A549 (cell line): ENCODE measurements at regions of chr15 and their contacts with region 1.

Region 1: DNA sequence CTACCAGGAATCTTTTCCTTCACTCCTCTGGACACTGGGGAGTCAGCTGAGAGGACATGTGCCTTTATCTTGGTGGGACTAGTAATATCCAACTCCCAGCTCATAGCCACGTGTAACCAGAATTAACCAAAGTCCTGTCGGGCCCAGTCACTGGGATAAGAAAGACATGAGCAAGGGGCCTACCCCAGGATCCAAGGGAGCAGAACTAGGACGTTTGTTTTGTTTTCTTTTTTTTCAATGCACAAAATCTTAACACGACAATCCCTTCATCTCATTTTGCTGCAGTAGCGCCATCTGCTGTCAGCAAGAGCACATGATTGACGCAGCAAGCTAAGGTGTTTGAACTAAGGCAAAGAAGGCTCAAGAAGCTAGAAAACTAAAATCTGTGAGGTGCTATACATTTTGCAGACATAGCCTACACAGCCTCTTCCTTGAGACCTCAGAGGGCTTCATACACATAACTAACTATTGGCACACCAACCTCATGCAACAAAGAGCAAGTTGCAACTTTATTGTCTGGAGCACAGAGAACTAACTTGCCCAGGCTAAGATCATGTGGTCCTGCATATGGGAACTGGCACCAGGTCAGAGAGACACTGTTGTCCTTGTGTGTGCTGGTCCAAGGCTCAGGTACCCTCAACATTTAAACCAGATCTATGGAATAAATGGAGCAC is 43.6 kb downstream of the RLBP1 start:
- DNase-seq: peak; percentile 70 to 82
- ATAC-seq: peak; percentile 83 to 89
- H3K4me3 ChIP-seq: no peak overlapping the region
- H3K27ac ChIP-seq: peak overlapping the region; percentile 10 to 14; a peak in 1 of 6 replicates
- H3K4me1 ChIP-seq: no peaks in the 10 kb centered on the region
- CTCF ChIP-seq: peak; percentile 98
- EP300 ChIP-seq: no peak
- POLR2A ChIP-seq: no peak
- RAD21 ChIP-seq: peak; percentile 94 to 96

Region 2: DNA sequence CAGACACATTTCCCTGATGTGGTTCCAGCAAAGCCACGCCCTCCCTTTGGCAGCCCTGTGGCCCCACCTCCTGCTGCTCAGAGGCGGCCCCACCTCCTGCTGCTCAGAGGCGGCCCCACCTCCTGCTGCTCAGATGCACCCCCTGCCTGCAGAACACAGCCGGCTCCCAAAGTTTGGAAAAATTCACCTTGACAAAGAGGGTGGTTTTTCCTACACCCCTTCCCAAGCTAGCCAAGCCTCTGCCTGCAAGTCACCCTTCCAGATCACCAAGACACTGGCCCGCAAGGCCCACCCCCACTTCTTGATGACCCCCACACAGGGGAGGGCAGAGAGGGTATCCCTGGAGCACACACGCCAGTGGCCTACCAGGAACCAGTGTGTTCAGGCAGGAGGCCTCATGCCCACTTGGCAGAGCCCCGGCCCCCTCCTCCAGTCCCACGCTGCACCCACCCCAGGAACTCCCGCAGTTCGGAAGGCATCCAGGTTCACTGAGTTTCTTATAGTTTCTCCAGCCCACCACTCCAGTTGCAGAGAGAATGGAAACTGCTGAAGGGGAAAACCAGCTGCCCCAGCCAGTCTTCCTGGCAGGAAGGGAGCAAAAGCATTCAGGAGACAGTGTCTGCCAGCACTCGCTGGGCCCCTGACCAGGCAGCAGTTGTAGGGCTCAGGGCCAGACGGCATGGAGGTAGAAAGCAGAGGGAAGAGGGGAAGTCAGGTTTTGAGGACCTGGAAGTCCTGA is 280.1 kb before region 1 on chr15:
- CTCF ChIA-PET with region 1: interaction called, 132 read pairs
- POLR2A ChIA-PET with region 1: no interaction called
- DNase-seq: peak; percentile 80 to 88
- ATAC-seq: peak; percentile 66 to 81
- H3K4me3 ChIP-seq: no peak overlapping the region
- H3K27ac ChIP-seq: peak overlapping the region; percentile 35 to 62; a peak in 5 of 6 replicates
- H3K4me1 ChIP-seq: peaks cover 32% of the 10 kb centered on the region
- CTCF ChIP-seq: peak; percentile 47
- EP300 ChIP-seq: no peak
- POLR2A ChIP-seq: no peak
- RAD21 ChIP-seq: peak; percentile 37; a peak in 3 of 5 replicates

Region 3: DNA sequence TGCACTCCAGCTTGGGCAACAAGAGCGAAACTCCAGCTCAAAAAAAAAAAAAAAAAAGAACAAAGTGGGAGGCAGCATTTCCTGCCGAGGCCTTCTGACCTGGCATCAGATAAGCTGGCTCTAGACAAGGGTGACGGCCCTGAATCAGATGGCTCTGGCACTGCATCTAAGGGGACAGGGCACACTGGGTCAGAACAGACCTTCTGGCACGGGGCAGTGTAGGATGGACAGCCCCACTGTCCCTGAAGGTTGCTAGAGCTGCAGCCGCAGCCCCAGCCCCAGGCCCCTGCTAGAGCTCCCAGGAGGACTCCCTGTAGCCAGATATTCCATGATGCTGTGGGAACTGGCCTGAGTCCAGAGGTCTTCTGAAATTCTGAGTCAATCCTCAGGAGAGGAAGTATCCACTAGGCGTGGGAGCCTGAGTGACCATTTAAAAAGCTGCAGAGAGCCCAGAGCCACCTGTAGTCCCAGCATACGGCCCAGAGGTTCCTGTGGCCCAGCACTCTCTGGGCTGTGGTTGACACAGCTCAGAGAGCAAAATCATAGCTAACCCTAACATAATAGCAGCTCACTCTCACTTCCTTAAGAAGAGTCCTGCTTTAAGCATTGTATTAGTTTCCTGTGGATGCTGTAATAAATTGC is 195.3 kb before region 1 on chr15:
- CTCF ChIA-PET with region 1: no interaction called
- POLR2A ChIA-PET with region 1: no interaction called
- DNase-seq: peak; percentile 72 to 86
- ATAC-seq: peak; percentile 78 to 89
- H3K4me3 ChIP-seq: no peak overlapping the region
- H3K27ac ChIP-seq: peak overlapping the region; percentile 87 to 89
- H3K4me1 ChIP-seq: peaks cover 57% of the 10 kb centered on the region
- CTCF ChIP-seq: no peak
- EP300 ChIP-seq: peak in 1 of 2 experiments; percentile 28; a peak in 2 of 5 replicates
- POLR2A ChIP-seq: no peak; the same call in none of the 2 replicates
- RAD21 ChIP-seq: no peak; a peak in 2 of 5 replicates

Region 4: DNA sequence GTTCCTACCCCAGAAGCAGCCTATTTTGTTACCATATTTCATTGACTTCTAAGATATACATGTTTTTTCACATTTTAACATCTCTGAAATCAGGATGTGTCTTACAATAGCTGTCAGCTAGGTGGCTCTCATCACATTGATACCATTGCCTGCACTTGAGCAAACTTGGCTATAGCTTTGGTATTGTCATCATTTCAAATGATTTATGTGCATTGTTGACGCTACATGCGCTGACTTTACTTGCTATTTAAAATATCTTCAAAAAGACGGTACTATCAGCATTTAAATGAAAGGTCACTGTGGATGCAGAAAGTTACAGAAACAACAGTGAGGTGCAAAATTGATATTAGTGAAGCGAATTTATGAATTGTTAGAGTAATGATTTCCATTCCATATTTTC is 143.5 kb before region 1 on chr15:
- CTCF ChIA-PET with region 1: interaction called, 224 read pairs
- POLR2A ChIA-PET with region 1: no interaction called
- DNase-seq: peak; percentile 54 to 62
- ATAC-seq: peak; percentile 56 to 76; a peak in 5 of 6 replicates
- H3K4me3 ChIP-seq: no peak overlapping the region
- H3K27ac ChIP-seq: no peak overlapping the region
- H3K4me1 ChIP-seq: no peaks in the 10 kb centered on the region
- CTCF ChIP-seq: peak; percentile 62
- EP300 ChIP-seq: no peak
- POLR2A ChIP-seq: no peak
- RAD21 ChIP-seq: peak; percentile 63 to 78

Region 5: DNA sequence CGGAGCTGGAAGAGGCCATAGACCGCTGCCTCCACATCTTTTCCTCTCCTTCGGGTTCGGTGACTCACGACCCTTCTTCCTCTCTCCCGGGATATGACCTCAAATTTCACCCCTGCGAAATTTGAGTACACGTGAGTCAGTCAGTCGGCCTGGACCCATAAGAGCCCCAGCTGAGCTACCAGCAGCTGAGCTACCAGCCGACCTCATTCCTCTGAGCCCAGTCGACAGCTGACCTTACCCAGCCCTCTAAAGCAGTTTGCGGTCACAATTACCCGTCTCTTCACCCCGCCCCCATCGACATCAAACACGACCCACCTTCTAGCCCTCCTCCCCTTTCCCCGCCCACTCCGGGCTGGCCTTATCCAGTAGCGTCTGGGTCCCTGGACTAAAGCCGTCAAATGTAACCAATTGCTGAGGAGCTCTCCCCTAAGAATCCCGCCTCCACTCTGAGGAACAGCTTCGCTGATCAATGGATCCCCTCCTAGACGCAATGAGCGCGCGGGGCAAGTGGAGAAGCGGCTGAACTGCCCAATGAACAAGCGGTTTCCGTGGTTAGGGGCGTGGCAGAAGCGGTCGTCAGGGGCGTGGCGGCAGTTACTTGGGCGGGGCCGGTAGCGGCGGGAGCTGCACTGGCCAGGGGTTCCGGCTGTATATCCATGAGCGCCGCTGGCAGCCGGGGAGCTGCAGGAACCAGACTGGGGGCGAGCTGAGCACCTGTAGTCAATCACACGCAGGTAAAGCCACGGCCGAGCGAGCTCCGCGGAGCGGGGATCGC is 89.8 kb before region 1 on chr15 and contains the start of gene ABHD2:
- CTCF ChIA-PET with region 1: interaction called, 157 read pairs
- POLR2A ChIA-PET with region 1: interaction called, 3 read pairs
- DNase-seq: peak; percentile 100
- ATAC-seq: peak; percentile 92 to 98
- H3K4me3 ChIP-seq: peak within 1 kb of the TSS; percentile 78
- H3K27ac ChIP-seq: peak within 1 kb of the TSS; percentile 80 to 88
- H3K4me1 ChIP-seq: peaks cover 44% of the 10 kb centered on the region
- CTCF ChIP-seq: no peak
- EP300 ChIP-seq: no peak
- POLR2A ChIP-seq: peak; percentile 70
- RAD21 ChIP-seq: 0 out of 5 replicates have a peak, but pooled peaks of 1 of the 2 experiments have one; percentile 30
- polyA plus RNA-seq, gene ABHD2: 63.3 and 76.4 TPM in 2 replicates

Region 6: GRCh38 chr15:89119489-89120123 is 58.2 kb before region 1 on chr15:
- CTCF ChIA-PET with region 1: interaction called, 25 read pairs
- POLR2A ChIA-PET with region 1: interaction called, 4 read pairs
- DNase-seq: peak; percentile 91 to 95
- ATAC-seq: peak; percentile 77 to 88
- H3K4me3 ChIP-seq: peak overlapping the region; percentile 16; the same call in 2 of the 3 replicates
- H3K27ac ChIP-seq: peak overlapping the region; percentile 87 to 95
- H3K4me1 ChIP-seq: peaks cover 96% of the 10 kb centered on the region
- CTCF ChIP-seq: no peak
- EP300 ChIP-seq: no peak
- POLR2A ChIP-seq: no peak
- RAD21 ChIP-seq: no peak; a peak in 1 of 5 replicates

Region 7: GRCh38 chr15:89150762-89151664 is 26.8 kb before region 1 on chr15:
- CTCF ChIA-PET with region 1: interaction called, 203 read pairs
- POLR2A ChIA-PET with region 1: no interaction called
- DNase-seq: no peak
- ATAC-seq: no peak
- H3K4me3 ChIP-seq: no peak overlapping the region
- H3K27ac ChIP-seq: no peak overlapping the region
- H3K4me1 ChIP-seq: peaks cover 7% of the 10 kb centered on the region; the same call in 2 of the 3 replicates
- CTCF ChIP-seq: no peak
- EP300 ChIP-seq: no peak
- POLR2A ChIP-seq: no peak
- RAD21 ChIP-seq: no peak

Region 8: DNA sequence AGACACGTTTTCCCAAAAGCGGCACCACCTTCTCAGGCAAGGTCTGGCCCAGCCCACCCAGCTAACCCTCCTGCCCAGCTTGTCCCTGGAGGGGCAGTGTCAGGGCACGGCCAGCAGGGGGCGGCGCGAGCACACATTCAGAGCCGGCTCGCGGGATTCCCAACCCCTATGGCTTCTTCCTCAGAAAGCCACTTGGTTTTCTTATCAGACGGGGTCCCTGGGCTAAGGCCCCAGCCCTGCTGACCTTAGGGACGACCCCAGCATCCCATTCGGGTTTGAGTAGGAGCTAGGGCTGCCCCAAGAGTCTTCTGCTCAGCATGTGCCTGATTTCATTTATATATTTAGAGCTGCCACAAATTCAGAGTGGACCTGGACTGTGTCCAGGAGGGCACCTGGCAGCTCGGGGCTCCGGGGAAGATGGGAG is 29.1 kb after region 1 on chr15:
- CTCF ChIA-PET with region 1: interaction called, 16 read pairs
- POLR2A ChIA-PET with region 1: no interaction called
- DNase-seq: peak; percentile 82 to 99
- ATAC-seq: peak; percentile 98 to 99
- H3K4me3 ChIP-seq: peak overlapping the region; percentile 36
- H3K27ac ChIP-seq: peak overlapping the region; percentile 23 to 65; a peak in 4 of 6 replicates
- H3K4me1 ChIP-seq: no peaks in the 10 kb centered on the region
- CTCF ChIP-seq: peak; percentile 97
- EP300 ChIP-seq: no peak
- POLR2A ChIP-seq: no peak
- RAD21 ChIP-seq: peak; percentile 93 to 94

Region 9: DNA sequence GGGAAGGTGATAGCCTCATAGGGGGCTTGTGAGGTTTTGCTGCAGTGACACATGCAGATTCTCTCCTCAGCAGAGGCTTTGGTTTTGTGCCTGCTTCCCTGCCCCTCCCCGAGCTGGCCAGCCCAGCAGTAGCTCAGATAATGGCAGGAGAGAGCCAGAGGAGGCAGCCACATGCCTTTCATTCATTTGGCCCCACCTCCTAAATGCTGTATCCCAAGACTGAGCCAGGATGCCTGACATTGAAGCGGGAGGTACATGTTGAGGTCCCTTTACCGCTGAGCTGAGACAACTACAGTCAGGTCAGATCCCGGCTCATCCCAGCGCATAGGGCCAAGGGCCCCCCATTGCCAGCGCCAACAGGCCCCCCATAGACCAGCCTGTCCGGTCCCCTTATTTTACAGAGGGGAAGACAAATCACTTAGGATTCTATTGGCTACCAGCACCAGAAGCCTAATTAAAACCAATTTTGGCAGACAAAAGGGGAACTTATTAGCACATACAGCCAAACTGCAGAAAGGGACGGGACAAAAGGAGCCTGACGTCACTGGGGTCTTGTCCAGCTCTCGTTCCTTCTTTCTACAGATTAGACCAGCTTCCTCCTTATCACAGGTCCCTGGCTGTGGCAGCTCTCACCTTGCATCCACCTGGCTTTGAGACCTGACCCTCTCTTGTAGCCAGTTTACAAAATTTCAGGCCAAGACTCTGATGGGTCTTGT is 168.9 kb after region 1 on chr15:
- CTCF ChIA-PET with region 1: no interaction called
- POLR2A ChIA-PET with region 1: no interaction called
- DNase-seq: no peak
- ATAC-seq: peak; percentile 40 to 65; a peak in 3 of 6 replicates
- H3K4me3 ChIP-seq: no peak overlapping the region
- H3K27ac ChIP-seq: no peak overlapping the region
- H3K4me1 ChIP-seq: no peaks in the 10 kb centered on the region
- CTCF ChIP-seq: no peak
- EP300 ChIP-seq: no peak
- POLR2A ChIP-seq: no peak
- RAD21 ChIP-seq: no peak